Transverse colon (tissue), 4 donors: ENCODE measurements at regions of chr5 and their contacts with region 1.

Region 1: GRCh38 chr5:180784497-180785097 is 18.0 kb downstream of the MGAT1 start:
- DNase-seq: peak; percentile 82
- H3K4me3 ChIP-seq: no peak overlapping the region
- H3K27ac ChIP-seq: peak overlapping the region; percentile 71 to 83 (median 80)
- H3K4me1 ChIP-seq: peaks cover 25 to 32% (median 26%) of the 10 kb centered on the region in 4 donors
- H3K27me3 ChIP-seq: no peaks in the 10 kb centered on the region
- CTCF ChIP-seq: peak; percentile 58 to 72 (median 67)
- EP300 ChIP-seq: no peak
- POLR2A ChIP-seq: no peak

Region 2: GRCh38 chr5:180848878-180849277 is 64.3 kb after region 1 on chr5:
- in situ Hi-C with region 1: loop called in 1 of 4 experiments (anchors 10 kb)
- intact Hi-C with region 1: no loop called
- DNase-seq: no peak
- H3K4me3 ChIP-seq: no peak overlapping the region
- H3K27ac ChIP-seq: no peak overlapping the region
- H3K4me1 ChIP-seq: no peaks in the 10 kb centered on the region
- H3K27me3 ChIP-seq: no peaks in the 10 kb centered on the region
- CTCF ChIP-seq: no peak
- EP300 ChIP-seq: no peak
- POLR2A ChIP-seq: no peak

Region 3: DNA sequence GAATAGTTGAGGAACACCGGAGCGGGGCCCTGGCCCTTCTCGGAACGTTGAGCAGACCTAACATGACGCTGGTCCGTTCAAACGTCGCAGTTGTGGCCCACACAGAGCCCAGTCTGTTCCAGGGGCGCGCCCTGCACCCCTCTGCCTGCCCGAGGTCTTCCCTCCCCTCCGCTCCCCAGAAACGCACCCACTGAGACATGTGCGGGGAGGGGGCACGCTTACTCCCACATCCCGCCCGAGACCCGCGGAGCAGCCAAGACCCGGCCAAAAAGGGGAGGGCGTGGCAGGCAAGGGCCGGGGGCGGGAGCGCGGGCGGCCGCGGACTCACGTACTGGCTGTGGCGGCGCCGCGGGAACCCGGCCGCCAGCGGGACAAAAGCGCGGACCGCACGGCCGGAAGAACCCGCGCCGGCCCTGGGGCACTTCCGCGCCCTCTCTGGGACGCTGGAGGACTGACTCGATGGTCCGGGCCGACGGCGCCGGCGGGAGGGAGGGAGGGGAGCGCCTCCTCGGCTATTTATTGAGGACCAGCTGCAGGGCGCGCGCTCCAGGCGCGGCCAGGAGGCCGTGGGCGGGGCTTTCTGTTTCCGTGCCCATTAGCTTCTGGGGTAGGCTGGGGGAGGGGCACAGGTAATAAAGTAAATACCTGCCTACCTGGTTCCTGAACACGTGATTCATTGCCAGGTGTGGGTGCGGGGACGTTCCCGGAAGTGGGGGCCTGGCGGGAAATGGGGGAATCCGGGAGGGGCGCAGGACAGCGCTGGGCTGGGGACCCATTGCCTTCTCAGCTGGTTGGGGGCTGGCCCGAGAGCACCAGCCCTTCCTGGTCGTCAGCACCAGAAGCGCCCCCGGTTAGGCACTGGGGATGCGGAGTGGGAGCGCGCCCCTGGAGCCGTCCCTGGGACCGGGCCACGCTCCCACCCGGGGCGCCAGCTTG is 76.6 kb after region 1 on chr5 and contains the start of gene ZFP62:
- in situ Hi-C with region 1: no loop called
- intact Hi-C with region 1: loop called (anchors 5 kb)
- DNase-seq: peak; percentile 94
- H3K4me3 ChIP-seq: peak within 1 kb of the TSS; percentile 63 to 91 (median 72)
- H3K27ac ChIP-seq: peak within 1 kb of the TSS; percentile 91 to 98 (median 93)
- H3K4me1 ChIP-seq: peaks cover 5 to 41% (median 24%) of the 10 kb centered on the region in 4 donors
- H3K27me3 ChIP-seq: no peaks in the 10 kb centered on the region
- CTCF ChIP-seq: peak in 2 of 5 experiments; percentile 29 to 46
- EP300 ChIP-seq: peak; percentile 1
- POLR2A ChIP-seq: peak; percentile 84
- total RNA-seq, gene ZFP62: 4.1 to 35.7 (median 26.9) TPM